ENCODE measurements at regions of chr2 and their contacts with region 1.

Region 1: GRCh38 chr2:9630749-9631483 is at the start of gene YWHAQ:
- DNase-seq: peak; percentile 97
- H3K4me3 Mint-ChIP-seq: peak within 1 kb of the TSS; percentile 95
- H3K27ac Mint-ChIP-seq: peak within 1 kb of the TSS; percentile 96
- H3K4me1 Mint-ChIP-seq: peaks cover 46% of the 10 kb centered on the region
- H3K27me3 Mint-ChIP-seq: peaks cover 12% of the 10 kb centered on the region
- total RNA-seq, gene YWHAQ: 308 to 322 TPM

Region 2: GRCh38 chr2:9415516-9416169 is 215.3 kb before region 1 on chr2:
- CTCF ChIA-PET with region 1: no interaction called
- POLR2A ChIA-PET with region 1: no interaction called
- DNase-seq: no peak
- H3K4me3 Mint-ChIP-seq: no peak overlapping the region
- H3K27ac Mint-ChIP-seq: no peak overlapping the region
- H3K4me1 Mint-ChIP-seq: peaks cover 46% of the 10 kb centered on the region
- H3K27me3 Mint-ChIP-seq: no peaks in the 10 kb centered on the region

Region 3: DNA sequence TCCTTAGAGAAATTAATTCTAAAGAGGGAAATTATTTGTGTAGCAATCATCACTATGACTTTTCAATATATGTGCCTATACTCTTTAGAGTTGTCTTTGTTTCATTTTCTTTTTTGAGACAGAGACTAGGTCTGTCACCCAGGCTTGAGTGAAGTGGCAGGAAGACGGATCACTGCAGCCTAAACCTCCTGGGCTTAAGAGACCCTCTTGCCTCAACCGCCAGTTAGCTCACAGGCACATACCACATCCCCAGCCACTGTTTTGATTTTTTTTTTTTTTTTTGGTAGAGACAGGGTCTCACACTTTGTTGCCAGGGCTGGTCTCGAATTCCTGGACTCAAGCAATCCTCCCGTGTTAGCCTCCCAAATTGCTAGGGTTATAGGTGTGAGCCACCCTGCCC is 12.5 kb before region 1 on chr2:
- CTCF ChIA-PET with region 1: interaction called, 19 read pairs
- POLR2A ChIA-PET with region 1: no interaction called
- DNase-seq: peak; percentile 65
- H3K4me3 Mint-ChIP-seq: peak overlapping the region; percentile 57
- H3K27ac Mint-ChIP-seq: peak overlapping the region; percentile 93
- H3K4me1 Mint-ChIP-seq: peaks cover 83% of the 10 kb centered on the region
- H3K27me3 Mint-ChIP-seq: no peaks in the 10 kb centered on the region

Measured in activated CD4-positive, alpha-beta T cell treated with anti-CD3 and anti-CD28 coated beads, Interleukin-2, amount 10 ng/mL, durations not matched to agents 7 days and 5 days (primary cell).